K562 (cell line): ENCODE measurements at regions of chr1 and their contacts with region 1.

Region 1: DNA sequence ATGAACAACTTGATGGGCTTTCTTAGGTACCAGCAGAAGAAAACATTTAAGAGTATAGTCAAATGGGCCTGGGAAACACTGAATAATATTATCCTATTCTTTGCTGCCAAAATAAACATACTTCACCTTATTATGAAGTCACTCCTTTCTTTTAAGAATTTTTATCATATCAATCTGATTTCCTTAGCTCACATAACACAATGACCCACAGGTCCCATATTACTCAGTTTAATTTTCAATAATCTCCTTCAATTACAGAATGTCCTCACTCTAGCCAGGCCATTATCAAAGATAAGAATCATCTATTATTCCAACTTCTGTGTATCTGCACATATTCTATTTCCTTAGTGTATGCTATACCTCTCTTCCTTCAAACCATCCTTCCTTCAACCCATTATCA is 63.0 kb downstream of the PIGK start:
- DNase-seq: no peak
- ATAC-seq: no peak
- H3K4me3 ChIP-seq: no peak overlapping the region
- H3K27ac ChIP-seq: no peak overlapping the region
- H3K4me1 ChIP-seq: no peaks in the 10 kb centered on the region
- H3K27me3 ChIP-seq: no peaks in the 10 kb centered on the region
- CTCF ChIP-seq: no peak
- EP300 ChIP-seq: no peak
- POLR2A ChIP-seq: no peak
- RAD21 ChIP-seq: no peak

Region 2: DNA sequence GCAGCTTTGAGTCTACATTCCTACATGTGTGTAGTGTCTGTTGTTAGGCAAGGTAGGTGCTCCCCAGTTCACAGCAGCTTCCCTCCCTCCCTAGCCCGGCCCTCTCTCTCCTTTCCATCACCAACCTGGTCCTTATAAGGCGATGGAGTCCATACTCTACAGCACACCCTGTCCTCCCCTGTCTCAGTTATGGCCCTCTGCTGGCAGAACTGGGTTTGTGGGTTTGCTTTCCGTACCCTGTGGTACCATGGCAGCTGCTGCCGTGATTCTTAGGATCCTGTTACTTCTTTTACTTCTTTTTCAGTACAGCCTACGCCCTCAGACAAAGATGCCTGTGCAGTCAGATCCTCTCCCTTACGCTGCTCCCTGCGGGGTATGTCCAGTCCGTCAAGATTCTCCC is 157.3 kb after region 1 on chr1:
- CTCF ChIA-PET with region 1: no interaction called
- POLR2A ChIA-PET with region 1: no interaction called
- in situ Hi-C with region 1: no loop called
- intact Hi-C with region 1: loop called (anchors 5 kb)
- DNase-seq: peak; percentile 8 to 42 (median 26)
- ATAC-seq: peak; percentile 94
- H3K4me3 ChIP-seq: no peak overlapping the region
- H3K27ac ChIP-seq: no peak overlapping the region
- H3K4me1 ChIP-seq: no peaks in the 10 kb centered on the region
- H3K27me3 ChIP-seq: no peaks in the 10 kb centered on the region
- CTCF ChIP-seq: peak; percentile 43 to 47 (median 45); a peak in 5 of 6 replicates
- EP300 ChIP-seq: no peak
- POLR2A ChIP-seq: no peak
- RAD21 ChIP-seq: peak in 1 of 2 experiments; percentile 29; a peak in 2 of 4 replicates